ENCODE measurements at regions of chr2 and their contacts with region 1.

Region 1: GRCh38 chr2:43226558-43226954 is at the start of gene ZFP36L2:
- DNase-seq: peak; percentile 96
- ATAC-seq: peak; percentile 65
- H3K4me3 Mint-ChIP-seq: peak within 1 kb of the TSS; percentile 98
- H3K27ac Mint-ChIP-seq: peak within 1 kb of the TSS; percentile 100
- H3K4me1 Mint-ChIP-seq: peaks cover 28% of the 10 kb centered on the region
- H3K27me3 Mint-ChIP-seq: no peaks in the 10 kb centered on the region
- total RNA-seq, gene ZFP36L2: 166 TPM

Region 2: GRCh38 chr2:42859006-42859552 is 367.5 kb before region 1 on chr2:
- CTCF ChIA-PET with region 1: interaction called, 11 read pairs
- POLR2A ChIA-PET with region 1: no interaction called
- DNase-seq: peak; percentile 79
- ATAC-seq: no peak
- H3K4me3 Mint-ChIP-seq: no peak overlapping the region
- H3K27ac Mint-ChIP-seq: no peak overlapping the region
- H3K4me1 Mint-ChIP-seq: no peaks in the 10 kb centered on the region
- H3K27me3 Mint-ChIP-seq: peaks cover 3% of the 10 kb centered on the region

Region 3: DNA sequence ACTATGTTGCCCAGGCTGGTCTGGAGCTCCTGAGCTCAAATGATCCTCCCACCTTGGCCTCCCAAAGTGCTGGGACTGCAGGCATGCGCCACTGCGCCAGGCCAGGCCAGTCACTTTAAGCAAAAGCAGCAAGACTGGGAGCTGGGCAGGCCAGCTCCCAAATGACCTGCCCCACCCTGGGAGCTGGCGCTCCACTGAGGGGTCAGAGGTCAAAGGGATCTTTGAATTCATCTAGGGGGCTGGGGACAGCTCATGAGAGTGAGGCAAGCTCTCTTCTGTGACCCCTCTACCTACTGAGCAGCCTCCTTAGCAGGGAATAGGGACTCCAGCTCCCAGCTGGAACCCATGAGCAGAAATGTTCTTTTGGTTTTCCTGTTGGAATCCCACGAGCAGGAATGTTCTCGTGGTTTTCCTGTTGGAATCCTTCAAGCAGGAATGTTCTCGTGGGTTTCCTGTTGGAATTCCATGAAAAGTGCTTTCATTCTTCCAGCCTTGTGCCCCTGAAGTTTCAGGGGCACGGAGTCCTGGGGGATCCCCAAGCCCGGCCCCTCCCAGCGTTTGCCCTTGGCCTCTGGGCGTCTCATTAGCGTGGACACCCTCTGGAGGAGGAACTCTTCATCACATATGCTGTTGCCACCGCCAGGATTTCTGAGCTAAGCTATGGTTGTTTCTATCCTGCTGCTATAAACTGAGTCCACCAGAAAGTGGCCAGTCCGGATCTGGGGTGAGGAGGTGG is 272.2 kb before region 1 on chr2:
- CTCF ChIA-PET with region 1: interaction called, 11 read pairs
- POLR2A ChIA-PET with region 1: no interaction called
- DNase-seq: no peak
- ATAC-seq: no peak
- H3K4me3 Mint-ChIP-seq: no peak overlapping the region
- H3K27ac Mint-ChIP-seq: no peak overlapping the region
- H3K4me1 Mint-ChIP-seq: no peaks in the 10 kb centered on the region
- H3K27me3 Mint-ChIP-seq: peaks cover 8% of the 10 kb centered on the region

Region 4: DNA sequence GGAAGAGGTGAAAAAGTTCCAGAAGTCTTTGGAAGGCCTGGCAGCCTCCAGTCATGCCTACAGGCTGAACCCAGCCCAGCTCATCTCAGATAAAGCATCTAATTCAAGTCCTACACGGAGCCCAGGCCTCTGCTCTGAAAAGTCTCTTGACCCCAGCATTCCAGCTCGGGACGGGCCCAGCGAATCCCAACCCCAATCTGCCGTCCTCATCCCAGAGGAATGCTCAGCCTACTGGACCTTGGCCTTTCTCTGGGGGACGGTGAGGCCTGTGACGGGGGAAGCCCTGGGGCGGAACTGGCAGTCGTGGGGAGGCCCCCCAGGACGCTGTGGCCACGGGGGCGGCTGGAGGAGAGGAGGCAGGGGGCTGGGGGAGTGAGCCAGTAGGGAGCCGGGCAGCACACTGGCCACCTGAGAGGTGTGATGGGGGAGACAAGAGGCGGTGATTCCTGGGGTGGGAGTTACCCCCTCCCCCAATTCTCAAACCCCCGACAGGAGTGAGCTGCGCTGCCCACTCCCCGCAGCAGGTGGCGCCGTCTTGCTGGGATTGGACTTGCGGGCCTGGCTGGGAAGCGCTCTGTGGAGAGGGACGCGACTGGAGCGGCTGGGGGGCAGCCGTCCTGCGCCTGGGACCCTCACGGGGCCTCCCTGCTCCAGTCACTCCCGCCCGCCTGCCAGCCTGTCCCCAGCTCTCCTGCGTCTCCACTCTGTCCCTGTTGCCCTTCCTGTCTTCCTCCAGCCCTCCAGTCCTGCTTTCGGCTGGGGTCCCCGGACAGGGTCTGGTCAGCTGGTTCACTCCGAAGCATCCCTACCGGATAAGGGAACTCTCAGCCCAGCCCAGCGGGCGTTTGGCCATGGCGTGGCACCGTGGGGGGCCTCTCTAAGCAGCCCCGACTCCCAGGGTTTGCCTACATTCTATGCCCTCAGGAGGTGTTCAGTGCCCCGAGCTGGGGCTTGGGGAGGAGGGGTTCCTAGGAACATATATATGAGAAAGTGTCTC is 251.5 kb before region 1 on chr2:
- CTCF ChIA-PET with region 1: interaction called, 76 read pairs
- POLR2A ChIA-PET with region 1: interaction called, 4 read pairs
- DNase-seq: peak; percentile 53
- ATAC-seq: peak; percentile 40
- H3K4me3 Mint-ChIP-seq: no peak overlapping the region
- H3K27ac Mint-ChIP-seq: no peak overlapping the region
- H3K4me1 Mint-ChIP-seq: peaks cover 13% of the 10 kb centered on the region
- H3K27me3 Mint-ChIP-seq: peaks cover 5% of the 10 kb centered on the region

Region 5: GRCh38 chr2:43131024-43131889 is 95.3 kb before region 1 on chr2:
- CTCF ChIA-PET with region 1: interaction called, 666 read pairs
- POLR2A ChIA-PET with region 1: interaction called, 622 read pairs
- DNase-seq: peak; percentile 94
- ATAC-seq: peak; percentile 40
- H3K4me3 Mint-ChIP-seq: peak overlapping the region; percentile 59
- H3K27ac Mint-ChIP-seq: peak overlapping the region; percentile 100
- H3K4me1 Mint-ChIP-seq: peaks cover 91% of the 10 kb centered on the region
- H3K27me3 Mint-ChIP-seq: no peaks in the 10 kb centered on the region

Region 6: DNA sequence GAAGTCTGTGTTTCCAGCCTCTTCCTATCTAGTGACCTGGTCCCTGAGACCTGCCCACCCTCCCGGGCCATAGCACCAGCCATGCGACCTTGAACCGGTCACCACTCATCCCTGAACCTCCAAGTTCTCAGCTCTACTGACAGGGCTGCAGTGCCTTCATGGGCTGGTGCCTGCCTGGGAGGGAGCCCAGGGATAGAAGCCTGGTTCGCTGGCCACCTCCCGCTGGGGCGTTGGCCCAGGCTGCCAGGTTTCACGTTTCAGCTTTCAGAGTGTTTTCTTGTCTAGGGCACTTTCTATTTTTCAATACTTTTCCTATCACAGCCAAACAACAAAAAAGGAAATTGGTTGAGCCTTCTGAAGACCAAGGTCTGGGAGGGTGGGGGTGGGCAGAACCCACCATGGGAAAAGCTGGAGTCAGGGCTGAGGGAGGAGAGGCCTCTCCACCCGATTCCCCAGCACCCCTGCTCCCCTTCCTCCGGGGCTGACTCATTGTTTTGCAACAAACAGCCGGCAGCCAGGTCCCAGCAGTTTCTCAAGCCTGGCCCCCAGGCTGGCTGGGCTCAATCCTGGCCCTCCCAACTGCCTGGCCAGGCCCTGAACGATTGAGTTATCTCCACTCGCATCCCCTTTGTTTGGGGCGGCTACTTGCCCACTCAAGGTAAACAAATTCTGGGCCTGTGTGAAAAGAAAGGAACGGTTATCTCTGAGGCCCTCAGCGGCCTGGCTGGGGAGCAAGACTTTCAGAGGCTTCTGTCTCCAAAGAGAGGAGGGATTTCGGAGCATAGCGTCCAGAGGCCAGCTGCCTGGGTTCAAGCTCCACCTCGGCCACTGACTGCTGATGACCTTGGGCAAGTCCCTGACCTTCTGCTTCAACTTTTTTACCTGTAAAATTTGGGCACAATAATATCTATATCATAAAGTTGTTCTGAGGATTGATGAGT is 47.7 kb before region 1 on chr2:
- CTCF ChIA-PET with region 1: interaction called, 30 read pairs
- POLR2A ChIA-PET with region 1: interaction called, 248 read pairs
- DNase-seq: no peak
- ATAC-seq: no peak
- H3K4me3 Mint-ChIP-seq: no peak overlapping the region
- H3K27ac Mint-ChIP-seq: peak overlapping the region; percentile 67
- H3K4me1 Mint-ChIP-seq: peaks cover 54% of the 10 kb centered on the region
- H3K27me3 Mint-ChIP-seq: no peaks in the 10 kb centered on the region

Region 7: GRCh38 chr2:43484323-43484930 is 257.9 kb after region 1 on chr2:
- CTCF ChIA-PET with region 1: interaction called, 91 read pairs
- POLR2A ChIA-PET with region 1: interaction called, 4 read pairs
- DNase-seq: no peak
- ATAC-seq: peak; percentile 49
- H3K4me3 Mint-ChIP-seq: no peak overlapping the region
- H3K27ac Mint-ChIP-seq: no peak overlapping the region
- H3K4me1 Mint-ChIP-seq: peaks cover 12% of the 10 kb centered on the region
- H3K27me3 Mint-ChIP-seq: no peaks in the 10 kb centered on the region